CD8-positive, alpha-beta T cell (primary cell): ENCODE measurements at regions of chr22 and their contacts with region 1.

Region 1: DNA sequence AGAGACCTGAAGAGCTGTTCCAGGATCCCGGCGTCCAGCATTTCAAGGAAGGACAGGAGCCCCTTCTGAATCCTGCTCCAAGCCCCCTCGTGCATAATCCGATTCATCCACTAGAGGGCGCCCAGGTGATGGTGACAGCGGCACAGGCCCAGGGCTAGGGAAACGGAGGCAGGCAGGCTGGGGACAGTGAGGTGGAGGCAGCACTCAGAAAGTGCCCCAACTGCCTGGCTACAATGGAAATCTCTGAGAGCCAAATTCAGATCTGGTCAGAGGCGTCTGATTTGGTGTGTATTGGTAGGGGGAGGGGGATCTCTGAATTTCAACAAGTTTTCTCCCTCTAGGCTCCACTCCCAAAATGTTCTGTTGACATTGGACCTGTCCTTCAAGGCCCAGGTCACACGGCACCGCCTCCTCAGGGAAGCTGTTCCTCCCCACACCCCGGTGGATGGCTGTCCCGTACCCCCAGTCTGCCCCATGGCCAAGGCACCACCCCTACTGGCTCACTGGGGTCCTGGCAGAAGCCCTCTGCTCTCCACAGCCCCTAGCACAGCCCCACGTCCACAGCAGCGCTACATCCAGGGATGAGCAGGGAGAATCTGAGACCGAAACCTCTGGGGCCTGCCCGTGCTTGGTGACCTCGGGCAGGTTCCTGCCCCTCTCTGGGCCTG is 142.9 kb downstream of the CRYBB2 start:
- DNase-seq: peak; percentile 42 to 78 (median 61)
- ATAC-seq: peak; percentile 61
- H3K4me3 ChIP-seq: no peak overlapping the region
- H3K4me3 Mint-ChIP-seq: no peak overlapping the region
- H3K27ac ChIP-seq: no peak overlapping the region
- H3K27ac Mint-ChIP-seq: no peak overlapping the region
- H3K4me1 ChIP-seq: peaks cover 4% of the 10 kb centered on the region
- H3K4me1 Mint-ChIP-seq: peaks cover 2% of the 10 kb centered on the region
- H3K27me3 ChIP-seq: no peaks in the 10 kb centered on the region
- H3K27me3 Mint-ChIP-seq: no peaks in the 10 kb centered on the region
- CTCF ChIP-seq: peak; percentile 86

Region 2: DNA sequence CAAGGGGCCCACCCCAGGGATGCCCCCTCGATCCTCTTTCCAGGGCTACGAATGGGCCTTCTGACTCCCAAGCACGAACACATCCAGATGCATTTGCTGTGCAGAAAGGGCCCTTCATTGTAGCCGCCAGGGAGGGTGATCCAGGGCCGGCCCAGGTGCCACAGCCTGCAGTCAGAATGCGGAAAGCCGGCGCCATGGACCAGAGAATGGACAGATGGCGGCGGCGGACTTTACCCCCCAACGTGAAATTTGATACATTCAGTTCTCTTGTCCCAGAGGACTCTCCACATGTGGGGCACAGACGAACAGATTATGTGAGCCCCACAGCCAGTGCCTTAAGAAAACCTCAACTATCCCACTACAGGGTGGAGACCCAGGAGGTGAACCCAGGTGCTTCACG is 322.6 kb before region 1 on chr22:
- CTCF ChIA-PET with region 1: no interaction called
- POLR2A ChIA-PET with region 1: no interaction called
- intact Hi-C with region 1: no loop called
- DNase-seq: no peak
- ATAC-seq: no peak
- H3K4me3 ChIP-seq: no peak overlapping the region
- H3K4me3 Mint-ChIP-seq: no peak overlapping the region
- H3K27ac ChIP-seq: no peak overlapping the region
- H3K27ac Mint-ChIP-seq: no peak overlapping the region
- H3K4me1 ChIP-seq: no peaks in the 10 kb centered on the region
- H3K4me1 Mint-ChIP-seq: no peaks in the 10 kb centered on the region
- H3K27me3 ChIP-seq: no peaks in the 10 kb centered on the region
- H3K27me3 Mint-ChIP-seq: peaks cover 3% of the 10 kb centered on the region
- CTCF ChIP-seq: no peak

Region 3: DNA sequence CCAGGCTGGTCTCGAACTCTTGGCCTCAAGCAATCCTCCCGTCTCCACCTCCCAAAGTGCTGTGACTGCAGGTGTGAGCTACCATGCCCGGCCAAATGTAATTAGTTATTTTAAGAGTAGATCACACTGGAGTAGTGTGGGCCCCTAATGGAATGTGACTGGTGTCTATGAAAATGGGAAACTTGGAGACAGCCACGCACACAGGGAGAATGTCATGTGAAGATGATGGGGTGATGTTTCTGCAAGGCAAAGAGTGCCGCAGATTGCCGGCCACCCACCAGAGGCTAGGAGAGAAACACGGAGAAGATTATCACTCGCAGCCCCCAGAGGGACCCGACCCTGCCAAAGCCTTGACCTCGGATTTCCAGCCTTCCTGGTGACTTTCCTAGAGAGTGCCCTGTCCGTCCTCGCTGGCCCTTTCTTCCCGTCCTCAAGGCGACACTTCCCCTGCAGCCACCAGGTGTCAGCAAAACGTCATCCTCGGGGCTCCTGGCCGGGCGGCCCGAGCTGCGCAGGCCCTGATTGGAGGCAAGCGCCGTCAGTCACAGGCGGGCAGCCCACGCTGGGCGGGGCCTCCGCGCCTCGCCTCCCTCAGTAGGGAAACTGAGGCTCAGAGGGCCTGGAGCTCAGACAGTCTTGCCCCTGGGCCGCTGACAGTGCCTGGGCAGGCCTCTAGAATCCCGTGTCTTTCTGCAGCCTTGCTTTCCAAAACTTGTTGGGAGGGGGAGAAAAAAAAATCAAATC is 126.6 kb before region 1 on chr22:
- CTCF ChIA-PET with region 1: no interaction called
- POLR2A ChIA-PET with region 1: no interaction called
- intact Hi-C with region 1: no loop called
- DNase-seq: peak; percentile 14 to 74 (median 48)
- ATAC-seq: peak; percentile 65
- H3K4me3 ChIP-seq: no peak overlapping the region
- H3K4me3 Mint-ChIP-seq: no peak overlapping the region
- H3K27ac ChIP-seq: no peak overlapping the region
- H3K27ac Mint-ChIP-seq: no peak overlapping the region
- H3K4me1 ChIP-seq: peaks cover 5% of the 10 kb centered on the region
- H3K4me1 Mint-ChIP-seq: peaks cover 4% of the 10 kb centered on the region
- H3K27me3 ChIP-seq: no peaks in the 10 kb centered on the region
- H3K27me3 Mint-ChIP-seq: peaks cover 51% of the 10 kb centered on the region
- CTCF ChIP-seq: peak; percentile 32

Region 4: DNA sequence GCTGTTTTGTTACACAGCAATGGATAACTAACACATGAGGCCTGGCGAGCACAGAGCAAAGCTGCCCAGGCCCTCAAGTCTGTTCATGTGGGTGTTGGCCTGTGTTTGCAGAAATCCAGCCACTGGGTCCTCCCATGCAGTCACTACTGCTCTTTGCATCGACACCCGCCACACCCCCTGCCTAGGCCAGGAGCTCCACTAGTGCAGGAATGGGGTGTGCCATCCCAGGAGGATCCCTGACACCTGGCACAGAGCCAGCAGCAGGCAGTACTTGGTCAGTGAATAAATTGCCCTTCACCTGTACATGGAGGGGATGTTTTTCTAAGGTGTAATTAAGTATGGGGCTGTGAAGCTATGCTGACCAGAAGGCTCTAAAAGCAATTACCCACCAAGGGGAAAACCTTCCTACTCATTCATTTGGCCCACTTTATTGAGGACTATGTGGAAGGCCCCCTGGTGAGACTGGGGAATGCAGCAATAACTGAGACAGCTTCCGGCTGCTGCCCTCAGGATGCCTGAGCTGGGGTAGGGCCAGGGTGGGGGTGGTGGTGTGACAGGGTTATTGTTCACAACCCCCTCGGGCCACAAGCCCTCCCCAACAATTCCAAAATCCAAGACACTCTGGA is 17.9 kb after region 1 on chr22:
- CTCF ChIA-PET with region 1: interaction called, 12 read pairs
- POLR2A ChIA-PET with region 1: no interaction called
- intact Hi-C with region 1: no loop called
- DNase-seq: no peak
- ATAC-seq: no peak
- H3K4me3 ChIP-seq: no peak overlapping the region
- H3K4me3 Mint-ChIP-seq: no peak overlapping the region
- H3K27ac ChIP-seq: no peak overlapping the region
- H3K27ac Mint-ChIP-seq: no peak overlapping the region
- H3K4me1 ChIP-seq: peaks cover 3% of the 10 kb centered on the region
- H3K4me1 Mint-ChIP-seq: peaks cover 9% of the 10 kb centered on the region
- H3K27me3 ChIP-seq: no peaks in the 10 kb centered on the region
- H3K27me3 Mint-ChIP-seq: no peaks in the 10 kb centered on the region
- CTCF ChIP-seq: no peak

Region 5: DNA sequence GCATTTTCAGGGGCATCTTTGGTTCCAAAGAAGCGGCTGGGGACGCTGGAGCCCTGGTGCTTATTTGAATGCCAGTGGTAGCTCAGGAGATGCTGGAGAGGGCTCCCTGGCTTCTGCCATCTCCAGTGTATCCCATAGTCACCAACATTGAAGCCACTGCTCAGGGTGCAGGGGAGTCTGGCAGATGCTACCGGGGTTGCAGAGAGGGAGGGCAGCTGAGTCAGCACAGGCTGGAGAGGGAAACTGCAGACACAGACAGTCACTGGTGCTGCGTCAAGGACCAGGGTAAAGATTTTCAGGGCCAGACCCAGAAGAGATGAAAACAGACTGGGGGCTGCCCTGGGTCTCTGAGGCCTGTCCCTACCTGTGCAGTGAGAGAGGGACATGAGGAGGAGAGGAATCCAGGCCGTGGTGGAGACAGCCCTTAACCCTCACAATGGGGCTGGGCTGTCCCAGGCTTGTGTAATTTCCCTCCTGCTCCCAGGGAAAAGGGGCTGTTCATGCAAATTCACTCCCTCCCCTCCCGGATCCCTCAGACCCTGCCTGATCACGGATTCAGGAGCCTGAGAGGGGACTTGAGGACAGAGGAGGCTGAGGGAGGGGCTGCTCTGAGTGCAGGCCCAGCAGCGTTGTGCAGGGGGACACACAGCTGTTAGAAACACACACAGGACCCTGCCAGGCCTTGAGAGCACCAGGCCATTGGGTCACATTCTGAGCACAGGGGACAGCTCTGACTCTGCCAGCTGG is 75.2 kb after region 1 on chr22:
- CTCF ChIA-PET with region 1: no interaction called
- POLR2A ChIA-PET with region 1: no interaction called
- intact Hi-C with region 1: loop called in 1 of 2 experiments (anchors 10 kb)
- DNase-seq: no peak
- ATAC-seq: no peak
- H3K4me3 ChIP-seq: no peak overlapping the region
- H3K4me3 Mint-ChIP-seq: no peak overlapping the region
- H3K27ac ChIP-seq: no peak overlapping the region
- H3K27ac Mint-ChIP-seq: no peak overlapping the region
- H3K4me1 ChIP-seq: no peaks in the 10 kb centered on the region
- H3K4me1 Mint-ChIP-seq: no peaks in the 10 kb centered on the region
- H3K27me3 ChIP-seq: peaks cover 0 to 3% of the 10 kb centered on the region in 2 experiments
- H3K27me3 Mint-ChIP-seq: no peaks in the 10 kb centered on the region
- CTCF ChIP-seq: no peak